ENCODE measurements at regions of chr10 and their contacts with region 1.

Region 1: DNA sequence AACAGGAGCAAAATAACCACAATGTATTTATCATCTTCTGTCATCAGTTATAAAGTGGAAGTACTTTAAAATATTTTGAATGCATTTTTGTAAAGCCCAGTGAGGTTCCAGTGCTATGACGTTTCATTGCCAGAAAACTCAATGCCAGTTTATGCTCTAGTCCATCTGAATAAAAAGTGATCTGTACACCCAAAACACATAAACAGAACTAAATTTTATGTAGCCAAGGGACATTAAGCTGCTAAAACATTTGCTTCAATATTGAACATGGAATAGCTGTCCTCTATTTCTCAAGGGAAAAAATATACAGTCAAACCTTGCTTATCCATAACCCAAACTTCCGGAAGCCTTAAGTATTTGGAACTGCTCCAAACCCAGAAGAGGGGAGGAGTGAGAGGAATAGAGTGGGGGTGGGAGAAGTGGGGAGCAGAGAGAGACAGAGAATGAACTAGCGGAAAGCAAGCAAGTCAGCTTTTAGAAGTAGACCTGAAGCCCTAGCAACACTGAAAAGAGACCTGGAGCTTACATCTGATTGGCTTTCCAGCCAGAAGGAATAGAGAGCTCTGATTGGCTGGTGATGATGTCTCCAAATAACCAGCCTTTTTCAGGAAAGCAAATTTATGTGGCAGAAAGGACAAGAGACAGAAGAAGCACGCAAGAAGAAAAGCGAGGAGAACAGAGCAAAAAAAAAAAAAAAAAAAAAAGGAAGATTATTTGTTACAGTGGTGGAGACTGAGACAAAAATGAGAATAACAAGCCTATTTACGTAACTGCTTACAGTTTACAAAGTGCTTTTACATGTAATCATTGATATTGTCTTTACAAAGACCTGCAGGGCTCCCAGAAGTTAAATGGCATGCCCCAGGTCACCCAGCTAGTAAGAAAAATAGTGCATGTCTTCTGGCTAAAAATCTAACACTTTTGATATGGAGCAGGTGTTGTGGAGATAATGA is 196.0 kb downstream of the RNLS start:
- DNase-seq: no peak
- H3K4me3 ChIP-seq: no peak overlapping the region
- CTCF ChIP-seq: no peak
- POLR2A ChIP-seq: no peak

Region 2: DNA sequence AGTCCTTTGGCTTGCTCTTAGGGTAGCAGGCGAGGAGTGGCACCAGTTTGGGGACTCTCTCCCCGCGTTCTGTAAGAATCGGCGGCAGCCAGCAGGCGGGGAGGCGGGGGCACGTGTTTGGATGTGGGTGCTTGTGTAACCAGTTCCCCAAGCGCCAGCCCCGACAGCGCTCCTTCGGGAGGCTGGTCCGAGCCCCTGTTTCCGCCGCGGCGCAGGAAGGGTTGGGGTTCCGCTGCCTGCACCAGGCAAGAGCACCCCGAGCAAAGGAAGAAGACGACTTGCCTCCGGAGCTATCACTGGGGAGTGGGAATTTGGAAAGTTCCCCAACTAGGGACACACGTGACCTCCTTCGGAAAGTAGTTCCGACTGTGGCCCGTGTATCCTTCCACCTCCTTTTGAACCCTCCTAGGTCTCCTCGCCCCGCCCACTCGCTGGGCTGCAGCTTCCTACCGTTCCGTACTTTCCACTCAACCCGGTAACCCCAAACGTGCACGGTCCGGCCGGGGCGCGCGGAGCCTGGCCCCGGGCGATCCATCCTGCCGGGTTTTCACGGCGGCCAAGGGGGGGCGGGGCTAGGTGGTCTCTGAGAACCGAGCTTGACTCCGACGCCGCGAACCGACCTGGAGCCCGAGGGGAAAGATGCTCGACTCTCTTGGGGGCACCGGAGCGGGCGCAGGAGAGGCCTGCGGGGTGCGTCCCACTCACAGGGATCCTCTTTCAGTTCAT is 525.0 kb before region 1 on chr10:
- intact Hi-C with region 1: loop called (anchors 10 kb)
- DNase-seq: peak; percentile 96 to 99
- H3K4me3 ChIP-seq: peak overlapping the region; percentile 97
- CTCF ChIP-seq: no peak
- POLR2A ChIP-seq: no peak

Region 3: DNA sequence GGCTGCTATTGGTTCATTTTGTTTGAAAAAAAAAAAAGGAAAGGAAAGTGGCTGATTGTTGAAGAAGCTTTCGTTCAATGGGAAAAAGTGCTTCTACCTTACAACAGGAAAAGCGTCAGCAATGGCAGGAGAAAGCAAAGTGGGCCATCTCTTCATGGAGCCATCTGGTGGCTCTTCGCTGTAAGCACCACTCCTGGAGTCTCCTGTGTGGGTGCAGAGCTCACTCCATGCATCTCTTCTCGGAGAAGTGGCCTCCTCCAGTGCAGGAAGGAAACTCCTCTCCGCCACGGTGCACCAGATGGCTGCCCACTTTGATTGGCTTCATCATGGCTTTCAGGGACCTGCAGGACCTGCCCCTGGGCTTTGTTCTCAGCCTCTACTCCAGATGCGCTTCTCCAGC is 272.7 kb before region 1 on chr10:
- intact Hi-C with region 1: loop called (anchors 10 kb)
- DNase-seq: no peak
- H3K4me3 ChIP-seq: no peak overlapping the region
- CTCF ChIP-seq: no peak
- POLR2A ChIP-seq: no peak

Region 4: DNA sequence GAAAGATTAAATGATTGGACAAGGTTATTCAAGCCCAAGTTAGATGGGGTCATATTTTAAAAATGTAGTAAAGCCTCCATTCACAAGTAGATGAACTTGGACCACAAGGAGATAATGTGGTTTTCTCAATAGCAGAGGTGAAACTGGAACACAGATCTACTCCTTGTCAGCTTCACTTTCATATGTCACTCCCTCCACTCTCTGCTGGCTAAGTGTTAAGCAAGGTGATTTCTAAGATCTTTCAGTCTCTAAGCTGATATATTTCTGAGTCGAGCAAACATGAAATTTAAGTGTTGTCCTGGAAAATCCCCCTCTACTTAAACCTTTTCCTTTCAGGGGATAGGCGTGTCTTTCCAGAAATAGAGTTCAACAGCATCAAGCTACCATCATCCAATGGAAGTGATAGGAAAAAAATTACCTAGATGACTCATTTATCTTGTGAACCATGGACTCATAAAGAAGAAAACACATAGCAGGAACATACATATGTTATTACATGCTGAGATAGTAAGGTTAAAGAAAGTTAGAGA is 248.7 kb before region 1 on chr10:
- intact Hi-C with region 1: no loop called
- DNase-seq: no peak
- H3K4me3 ChIP-seq: no peak overlapping the region
- CTCF ChIP-seq: no peak
- POLR2A ChIP-seq: no peak